Right ventricle myocardium superior (tissue), 1 donor: ENCODE measurements at regions of chr3 and their contacts with region 1.

Region 1: DNA sequence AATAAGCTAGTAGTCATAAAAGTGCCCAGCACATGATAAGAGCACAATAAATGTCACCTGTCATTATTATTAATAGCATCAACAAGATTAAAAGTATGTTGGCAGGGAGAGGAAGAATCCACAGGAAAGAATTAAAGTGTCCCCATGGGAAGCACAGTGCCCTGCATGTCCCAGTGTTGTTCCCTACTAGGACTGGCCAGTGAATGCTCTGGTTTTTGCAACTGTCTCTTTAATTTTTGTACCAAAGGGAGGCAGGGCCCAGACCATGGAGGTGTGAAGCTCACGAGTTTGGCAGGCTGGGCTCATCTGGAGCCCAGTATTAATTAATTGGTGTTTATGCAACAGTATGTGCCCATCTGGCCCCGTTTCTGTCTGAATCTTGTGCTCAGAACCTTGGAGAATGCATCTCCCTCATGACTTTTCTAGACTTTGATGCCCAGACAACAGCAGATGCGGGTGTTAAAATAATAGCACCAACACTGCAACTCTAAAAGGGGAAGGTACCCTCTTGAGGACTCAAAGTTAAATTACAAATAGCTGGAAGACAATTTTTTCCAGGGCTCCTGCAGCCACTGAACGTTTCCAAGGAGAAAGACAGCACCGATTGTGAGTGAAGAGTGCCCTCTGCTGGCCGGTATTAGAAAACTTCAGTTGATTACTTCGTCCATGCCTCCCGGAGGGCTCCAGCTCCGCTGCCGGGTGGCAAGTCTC is 71.9 kb upstream of the SPATA12 start:
- DNase-seq: peak; percentile 73
- ATAC-seq: peak; percentile 91

Region 2: GRCh38 chr3:56702490-56703315 is 285.9 kb before region 1 on chr3:
- intact Hi-C with region 1: loop called (anchors 2 kb)
- DNase-seq: no peak
- ATAC-seq: peak; percentile 79

Region 3: DNA sequence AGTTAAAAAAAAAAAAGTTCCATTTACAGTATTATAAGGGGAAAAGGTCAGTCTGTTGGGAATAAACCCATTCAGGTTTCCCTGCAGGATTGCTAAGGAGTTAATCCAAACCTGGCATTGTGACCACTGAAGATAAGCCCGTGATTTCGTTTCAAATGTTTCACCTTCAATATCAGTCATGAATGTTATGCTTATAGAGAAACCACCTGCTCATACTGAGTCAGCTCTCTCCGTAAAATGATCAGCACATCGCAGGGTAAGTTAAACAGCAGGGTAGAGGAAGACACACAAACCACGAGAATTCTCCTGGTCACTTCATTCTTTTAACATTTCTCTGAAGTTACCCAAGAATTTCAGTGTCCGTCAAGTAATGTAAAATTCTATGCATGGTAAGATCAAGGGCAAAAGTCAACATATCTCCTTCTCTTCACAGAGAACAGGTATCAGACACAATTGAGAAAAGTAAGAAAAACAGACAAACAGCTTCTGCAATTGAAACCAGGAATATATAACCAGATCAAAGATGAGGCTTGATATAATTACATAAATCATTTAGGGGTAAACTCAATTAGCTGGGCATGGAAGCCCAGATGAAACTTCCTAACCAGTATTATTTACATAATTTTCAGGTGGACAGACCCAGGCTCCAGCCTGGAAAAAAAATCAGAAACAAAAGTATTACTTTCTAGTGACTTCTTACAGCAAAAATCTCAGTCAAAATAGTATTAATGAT is 119.3 kb before region 1 on chr3:
- intact Hi-C with region 1: no loop called
- DNase-seq: no peak
- ATAC-seq: no peak

Region 4: GRCh38 chr3:56894881-56895431 is 93.7 kb before region 1 on chr3:
- intact Hi-C with region 1: no loop called
- DNase-seq: no peak
- ATAC-seq: peak; percentile 27

Region 5: DNA sequence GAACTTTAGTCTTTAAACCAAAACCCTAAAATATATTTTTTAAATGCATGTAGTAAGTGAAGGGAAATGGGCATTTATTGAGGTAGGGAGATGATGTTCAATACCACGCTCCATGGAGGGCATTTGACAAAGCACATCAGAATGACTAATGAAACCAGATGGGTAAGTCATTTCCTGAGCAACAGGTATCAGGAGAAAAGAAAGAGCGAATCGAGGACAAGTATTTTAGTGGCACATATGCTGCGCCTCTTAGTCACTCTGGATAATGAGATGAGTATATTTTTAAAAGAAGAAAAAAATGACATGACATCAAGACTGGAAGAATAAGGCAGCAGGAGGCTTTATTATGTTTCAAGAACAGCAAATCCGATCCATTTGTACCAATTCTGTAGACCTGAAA is 57.9 kb before region 1 on chr3:
- intact Hi-C with region 1: loop called (anchors 10 kb)
- DNase-seq: no peak
- ATAC-seq: no peak

Region 6: GRCh38 chr3:57227204-57227929 is 238.8 kb after region 1 on chr3 and contains the start of gene APPL1:
- intact Hi-C with region 1: no loop called
- DNase-seq: peak; percentile 96
- ATAC-seq: peak; percentile 98
- total RNA-seq, gene APPL1: 42.9 TPM